ENCODE measurements at regions of chr14 and their contacts with region 1.

Region 1: GRCh38 chr14:81269100-81269978 is 48.6 kb upstream of the GTF2A1 start:
- DNase-seq: no peak
- H3K4me3 ChIP-seq: no peak overlapping the region
- H3K27ac ChIP-seq: no peak overlapping the region
- H3K4me1 ChIP-seq: no peaks in the 10 kb centered on the region
- H3K27me3 ChIP-seq: no peaks in the 10 kb centered on the region
- CTCF ChIP-seq: peak; percentile 54 to 68 (median 65)

Region 2: GRCh38 chr14:81453166-81453766 is 183.9 kb after region 1 on chr14:
- intact Hi-C with region 1: loop called (anchors 1 kb)
- DNase-seq: no peak
- H3K4me3 ChIP-seq: peak overlapping the region in 1 of 2 donors; percentile 22
- H3K27ac ChIP-seq: no peak overlapping the region
- H3K4me1 ChIP-seq: peaks cover 0 to 5% of the 10 kb centered on the region in 2 donors
- H3K27me3 ChIP-seq: no peaks in the 10 kb centered on the region
- CTCF ChIP-seq: peak; percentile 54 to 85 (median 78)

Region 3: DNA sequence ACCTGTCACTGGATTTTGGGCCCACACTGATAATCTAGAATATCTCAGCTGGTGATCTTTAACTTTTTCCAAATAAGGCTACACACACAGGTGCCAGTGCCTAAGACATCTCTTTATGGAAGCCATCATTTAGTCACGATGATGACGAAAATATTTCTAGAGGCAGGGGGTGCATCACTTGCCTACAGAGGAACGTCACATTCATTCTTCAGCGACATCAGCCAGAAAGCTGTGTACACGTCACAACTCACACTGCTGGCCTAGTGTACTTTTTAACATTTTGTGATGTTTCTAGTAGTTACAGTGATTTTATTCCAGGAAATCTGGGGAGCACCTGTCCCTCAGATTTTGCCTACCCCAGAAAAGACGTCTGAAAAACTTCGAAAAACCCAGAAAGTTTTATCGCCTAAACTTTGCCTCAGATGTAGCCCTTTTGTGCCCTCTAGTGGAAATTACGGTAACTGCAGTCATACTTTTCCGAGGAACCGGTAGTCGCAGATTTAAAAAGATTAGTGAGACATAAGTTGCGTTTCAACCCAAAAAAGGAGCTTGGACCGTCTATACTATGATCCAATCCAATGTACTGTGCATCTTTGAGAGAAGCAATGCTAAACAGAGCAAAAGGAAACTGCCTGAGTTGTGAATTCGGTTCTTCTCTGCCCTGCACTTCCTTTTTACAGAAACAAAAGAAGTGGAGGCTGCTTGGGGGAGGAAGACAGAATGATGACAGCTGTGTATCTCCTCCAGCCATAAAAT is 195.1 kb after region 1 on chr14:
- intact Hi-C with region 1: loop called (anchors 1 kb)
- DNase-seq: no peak
- H3K4me3 ChIP-seq: peak overlapping the region; percentile 49 to 66
- H3K27ac ChIP-seq: no peak overlapping the region
- H3K4me1 ChIP-seq: no peaks in the 10 kb centered on the region
- H3K27me3 ChIP-seq: no peaks in the 10 kb centered on the region
- CTCF ChIP-seq: peak; percentile 63 to 92 (median 89)

Measured in ascending aorta (tissue), 2 donors.